Vagina (tissue), 2 donors: ENCODE measurements at regions of chr16 and their contacts with region 1.

Region 1: DNA sequence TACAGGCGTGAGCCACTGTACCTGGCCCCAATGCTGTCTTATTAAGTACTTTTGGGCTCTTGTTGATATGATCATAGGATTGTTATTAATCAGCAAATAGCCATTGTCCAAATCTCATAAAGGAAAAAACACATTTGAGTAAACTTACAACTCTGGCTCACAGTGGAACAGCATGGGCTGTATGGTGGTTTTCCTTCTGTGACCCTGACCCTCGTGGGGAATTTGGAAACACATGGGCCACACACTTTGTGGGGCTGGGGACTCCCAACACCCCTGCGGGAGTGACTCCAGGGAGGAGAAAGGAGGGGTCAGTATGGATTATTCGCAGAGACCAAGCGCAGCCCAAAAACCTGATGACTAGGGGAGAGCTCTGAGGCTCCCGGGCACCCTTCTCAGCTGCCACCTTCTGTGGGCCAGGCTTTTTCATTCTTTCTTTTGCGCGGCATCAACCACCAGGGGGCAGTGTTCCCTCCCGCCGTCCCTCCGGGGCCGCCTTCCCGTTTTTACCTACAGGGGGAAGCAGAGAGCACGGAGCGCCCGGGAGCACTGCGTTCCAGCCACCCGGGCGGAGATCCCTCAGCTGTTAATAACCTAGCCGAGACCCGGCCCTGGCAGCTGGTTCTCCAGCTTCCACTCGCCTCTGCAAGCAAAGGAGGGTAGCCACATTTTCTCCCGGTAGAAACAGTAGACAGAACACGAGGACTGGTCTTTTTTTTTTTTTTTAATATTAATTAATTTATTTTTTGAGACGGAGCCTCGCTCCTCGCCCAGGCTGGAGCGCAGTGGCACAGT is 9.7 kb downstream of the TSNAXIP1 start:
- DNase-seq: no peak
- H3K4me3 ChIP-seq: no peak overlapping the region
- H3K27ac ChIP-seq: no peak overlapping the region
- H3K4me1 ChIP-seq: peaks cover 5% of the 10 kb centered on the region
- H3K27me3 ChIP-seq: no peaks in the 10 kb centered on the region
- CTCF ChIP-seq: peak; percentile 99
- POLR2A ChIP-seq: no peak

Region 2: GRCh38 chr16:66444049-66444481 is 1372.4 kb before region 1 on chr16:
- intact Hi-C with region 1: no loop called
- DNase-seq: no peak
- H3K4me3 ChIP-seq: no peak overlapping the region
- H3K27ac ChIP-seq: no peak overlapping the region
- H3K4me1 ChIP-seq: no peaks in the 10 kb centered on the region
- H3K27me3 ChIP-seq: no peaks in the 10 kb centered on the region
- CTCF ChIP-seq: no peak
- POLR2A ChIP-seq: no peak

Region 3: GRCh38 chr16:67935402-67936123 is 119.1 kb after region 1 on chr16:
- intact Hi-C with region 1: loop called (anchors 5 kb)
- DNase-seq: peak in 1 of 2 donors; percentile 97
- H3K4me3 ChIP-seq: peak overlapping the region; percentile 82 to 97
- H3K27ac ChIP-seq: peak overlapping the region; percentile 95
- H3K4me1 ChIP-seq: peaks cover 38% of the 10 kb centered on the region
- H3K27me3 ChIP-seq: no peaks in the 10 kb centered on the region
- CTCF ChIP-seq: no peak
- POLR2A ChIP-seq: peak in 1 of 2 donors; percentile 55

Region 4: DNA sequence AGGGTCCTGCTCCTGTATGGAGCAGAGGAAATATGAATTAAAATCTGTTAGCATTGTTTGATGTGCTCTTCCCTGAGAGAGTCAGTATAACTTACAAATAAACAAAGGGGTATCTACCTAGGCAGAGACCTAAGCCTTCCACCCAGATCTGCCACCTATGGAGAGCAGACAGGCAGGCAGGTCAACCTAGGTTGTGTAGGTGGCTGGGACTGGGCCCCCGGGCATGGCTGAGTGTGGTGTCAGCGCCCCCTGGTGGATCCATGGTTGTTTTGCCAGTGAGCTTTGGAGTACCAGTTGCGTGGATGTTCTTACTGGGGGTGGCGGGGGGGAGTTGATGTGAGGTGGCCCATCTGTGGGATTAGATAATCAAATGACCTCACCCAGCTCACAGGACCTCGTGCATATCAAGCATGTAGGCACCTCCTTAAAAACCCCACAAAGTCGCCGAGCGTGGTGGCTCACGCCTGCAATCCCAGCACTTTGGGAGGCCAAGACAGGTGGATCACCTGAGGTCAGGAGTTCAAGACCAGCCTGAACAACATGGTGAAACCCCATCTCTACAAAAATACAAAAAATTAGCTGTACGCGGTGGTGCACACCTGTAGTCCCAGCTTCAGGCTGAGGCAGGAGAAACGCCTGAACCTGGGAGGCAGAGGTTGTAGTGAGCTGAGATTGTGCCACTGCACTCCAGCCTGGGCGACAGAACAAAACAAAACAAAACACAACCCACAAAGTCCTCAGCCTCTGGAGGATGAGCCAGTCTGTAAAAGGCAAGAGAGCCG is 224.3 kb after region 1 on chr16:
- intact Hi-C with region 1: loop called (anchors 10 kb)
- DNase-seq: no peak
- H3K4me3 ChIP-seq: no peak overlapping the region
- H3K27ac ChIP-seq: no peak overlapping the region
- H3K4me1 ChIP-seq: no peaks in the 10 kb centered on the region
- H3K27me3 ChIP-seq: no peaks in the 10 kb centered on the region
- CTCF ChIP-seq: peak; percentile 81 to 85 (median 85)
- POLR2A ChIP-seq: no peak